ENCODE measurements at regions of chr1 and their contacts with region 1.

Region 1: DNA sequence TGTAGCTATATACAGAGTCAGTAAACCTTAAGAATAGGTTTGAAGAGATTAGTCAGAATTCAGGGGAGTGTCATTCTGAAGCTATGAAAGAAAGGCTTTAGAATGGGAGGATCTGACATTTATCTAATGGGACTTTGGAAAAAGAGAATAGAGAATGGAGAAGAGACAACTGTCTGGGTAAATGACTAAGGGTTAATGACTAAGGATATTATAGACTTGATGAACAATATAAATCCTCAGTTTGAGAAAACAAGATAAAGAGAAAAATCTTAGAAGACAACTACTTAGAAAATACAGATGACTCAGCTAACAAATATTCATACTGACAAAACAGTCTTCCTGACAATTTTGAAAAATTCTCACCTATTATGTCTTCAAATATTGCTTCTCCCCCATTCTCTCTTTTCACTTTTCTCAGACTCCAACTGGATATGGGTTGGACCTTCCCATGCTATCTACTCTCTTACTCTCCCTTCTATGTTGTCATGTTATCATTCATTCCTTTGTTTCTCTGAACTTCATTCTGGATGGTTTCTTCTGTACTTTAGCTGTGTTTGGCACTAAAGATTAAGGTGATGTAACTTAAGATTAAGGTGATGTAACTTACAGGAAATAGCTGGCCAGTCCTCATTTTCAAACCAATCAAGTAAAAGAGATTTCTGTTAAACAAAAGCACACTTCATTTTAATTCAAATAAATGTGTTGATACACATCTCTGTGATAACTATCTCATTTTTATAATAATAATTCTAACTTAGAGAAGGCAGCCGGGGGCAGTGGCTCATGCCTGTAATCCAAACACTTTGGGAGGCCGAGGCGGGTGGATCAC is 20.3 kb downstream of the SLC16A1 start:
- DNase-seq: peak in 2 of 4 experiments; percentile 48 to 54
- ATAC-seq: peak; percentile 78
- H3K4me3 ChIP-seq: no peak overlapping the region
- H3K27ac ChIP-seq: peak overlapping the region; percentile 65
- H3K4me1 ChIP-seq: peaks cover 14 to 43% of the 10 kb centered on the region in 2 experiments
- H3K27me3 ChIP-seq: no peaks in the 10 kb centered on the region
- CTCF ChIP-seq: no peak
- EP300 ChIP-seq: peak; percentile 93
- POLR2A ChIP-seq: no peak
- RAD21 ChIP-seq: 0 out of 4 replicates have a peak, but pooled peaks of 1 of the 2 experiments have one; percentile 14

Region 2: DNA sequence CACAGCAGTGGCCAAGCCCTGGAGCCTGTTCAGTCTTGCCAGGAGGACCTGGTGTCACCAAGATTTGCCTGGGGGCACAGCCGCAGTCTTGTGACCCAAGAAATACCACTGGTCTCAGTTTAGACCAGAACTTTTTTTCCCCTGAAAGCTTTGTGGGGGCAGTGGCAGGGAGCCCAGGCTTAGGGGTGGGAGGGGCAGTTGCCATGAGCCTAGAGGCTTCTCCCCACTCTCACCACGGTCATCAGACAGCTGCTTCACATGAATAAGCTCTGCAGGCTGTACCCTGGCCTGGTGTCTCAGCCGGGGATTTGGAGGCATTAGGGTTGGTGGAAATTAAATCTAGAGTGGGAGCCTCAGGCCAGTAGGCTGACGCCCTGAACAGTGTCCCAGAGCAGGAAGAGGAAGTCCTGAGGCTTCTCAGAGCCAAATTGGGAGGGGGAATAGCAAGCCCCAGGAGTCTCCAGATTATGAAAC is 53.4 kb before region 1 on chr1:
- CTCF ChIA-PET with region 1: no interaction called
- POLR2A ChIA-PET with region 1: interaction called, 3 read pairs
- in situ Hi-C with region 1: no loop called
- intact Hi-C with region 1: loop called (anchors 5 kb)
- DNase-seq: no peak
- ATAC-seq: peak; percentile 13
- H3K4me3 ChIP-seq: no peak overlapping the region
- H3K27ac ChIP-seq: peak overlapping the region; percentile 34; the same call in 2 of the 3 replicates
- H3K4me1 ChIP-seq: peaks cover 28 to 31% of the 10 kb centered on the region in 2 experiments
- H3K27me3 ChIP-seq: peaks cover 0 to 4% of the 10 kb centered on the region in 2 experiments; a peak in 1 of 5 replicates
- CTCF ChIP-seq: no peak
- EP300 ChIP-seq: no peak
- POLR2A ChIP-seq: no peak
- RAD21 ChIP-seq: no peak

Region 3: GRCh38 chr1:112904071-112904830 is 31.4 kb before region 1 on chr1:
- CTCF ChIA-PET with region 1: no interaction called
- POLR2A ChIA-PET with region 1: interaction called, 5 read pairs
- in situ Hi-C with region 1: no loop called
- intact Hi-C with region 1: loop called (anchors 2 kb)
- DNase-seq: peak in 2 of 4 experiments; percentile 72 to 93
- ATAC-seq: peak; percentile 86
- H3K4me3 ChIP-seq: no peak overlapping the region
- H3K27ac ChIP-seq: peak overlapping the region; percentile 62; the same call in 2 of the 3 replicates
- H3K4me1 ChIP-seq: peaks cover 11 to 32% of the 10 kb centered on the region in 2 experiments; a peak in 4 of 5 replicates
- H3K27me3 ChIP-seq: no peaks in the 10 kb centered on the region
- CTCF ChIP-seq: no peak
- EP300 ChIP-seq: peak; percentile 61; the same call in 1 of the 2 replicates
- POLR2A ChIP-seq: no peak
- RAD21 ChIP-seq: no peak

Region 4: GRCh38 chr1:112925015-112925414 is 10.7 kb before region 1 on chr1:
- CTCF ChIA-PET with region 1: no interaction called
- POLR2A ChIA-PET with region 1: interaction called, 44 read pairs
- in situ Hi-C with region 1: no loop called
- intact Hi-C with region 1: no loop called
- DNase-seq: no peak
- ATAC-seq: peak; percentile 64
- H3K4me3 ChIP-seq: no peak overlapping the region
- H3K27ac ChIP-seq: no peak overlapping the region
- H3K4me1 ChIP-seq: peaks cover 0 to 7% of the 10 kb centered on the region in 2 experiments; a peak in 1 of 5 replicates
- H3K27me3 ChIP-seq: no peaks in the 10 kb centered on the region
- CTCF ChIP-seq: peak in 2 of 3 experiments; percentile 22 to 23; a peak in 1 of 6 replicates
- EP300 ChIP-seq: no peak
- POLR2A ChIP-seq: no peak
- RAD21 ChIP-seq: no peak